RWPE1 (cell line): ENCODE measurements at regions of chr12 and their contacts with region 1.

Region 1: DNA sequence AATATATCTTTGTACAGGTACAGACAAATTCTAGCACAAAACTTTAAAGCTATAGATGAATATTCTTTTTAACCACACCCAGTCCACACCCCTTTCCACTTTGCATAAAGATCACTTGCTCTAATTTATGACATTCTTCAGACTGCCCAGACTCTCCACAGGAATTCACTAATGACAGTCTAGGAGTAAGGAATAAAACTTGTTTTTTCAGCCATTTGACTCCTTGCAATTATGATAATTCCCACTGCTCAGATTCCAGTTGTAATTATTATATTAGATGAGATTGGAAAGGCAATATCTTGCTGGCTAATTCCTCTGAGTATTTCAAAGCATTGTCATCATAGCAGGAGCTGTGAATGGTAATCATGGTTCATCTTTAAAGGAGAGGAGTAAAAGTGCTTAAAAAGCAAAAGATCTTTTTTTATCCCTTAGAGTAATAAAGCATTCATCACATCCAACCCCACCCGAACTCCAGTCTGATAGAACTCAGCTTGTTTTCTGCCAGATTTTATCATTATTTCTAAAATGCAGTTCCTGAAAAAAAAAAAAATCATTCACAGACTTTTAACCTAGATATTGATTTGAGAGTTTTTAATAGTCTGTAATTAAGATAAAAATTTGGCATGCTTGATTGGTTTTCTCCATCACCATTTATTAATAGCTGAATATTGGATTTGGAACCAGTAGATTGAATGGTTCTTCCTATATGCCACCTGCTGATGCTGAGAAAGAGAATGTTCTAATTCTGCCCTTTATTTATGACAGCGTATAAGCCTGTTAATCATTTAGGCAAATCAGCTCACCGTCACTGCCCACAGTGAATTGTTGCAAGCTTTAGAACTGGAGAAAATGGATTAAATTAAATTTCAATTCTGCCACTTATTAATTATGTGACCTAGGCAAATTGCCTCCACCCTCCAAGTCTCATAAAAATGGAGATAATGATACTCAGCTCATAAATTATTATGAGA is 93.9 kb upstream of the RASSF8 start:
- DNase-seq: no peak
- H3K27ac ChIP-seq: no peak overlapping the region
- CTCF ChIP-seq: no peak

Region 2: DNA sequence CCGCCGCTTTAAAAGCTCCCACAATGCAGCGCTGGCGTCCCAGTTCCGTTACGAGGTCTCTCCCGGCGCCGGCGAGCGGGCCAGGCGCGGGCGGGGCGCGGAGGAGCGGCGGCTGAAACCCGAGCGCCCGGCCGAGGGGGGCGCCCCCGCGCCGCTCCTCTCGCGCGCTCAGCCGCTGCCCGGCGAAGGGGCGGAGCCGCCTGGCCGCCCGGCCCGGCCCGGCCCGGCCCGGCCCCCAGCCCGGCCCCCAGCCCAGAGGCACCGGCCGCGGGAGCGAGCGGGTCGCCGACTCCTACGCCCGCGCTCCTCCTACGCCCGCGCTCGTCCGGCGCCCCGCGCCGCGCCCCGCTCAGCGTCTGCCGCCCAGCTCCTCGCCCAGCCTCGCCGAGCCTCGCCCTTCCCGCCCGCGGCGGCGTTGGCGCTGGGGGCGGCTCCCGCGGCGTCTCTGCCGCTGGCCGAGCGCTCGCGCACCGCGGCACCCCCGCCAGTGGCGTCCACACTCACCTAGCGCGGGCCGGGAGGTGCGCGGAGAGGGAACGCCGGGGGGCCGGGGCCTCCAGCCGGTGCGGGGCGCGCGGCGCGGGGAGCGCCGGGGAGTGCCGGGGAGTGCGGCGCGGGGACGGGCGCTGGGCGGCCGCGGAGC is 94.0 kb after region 1 on chr12 and contains the start of gene RASSF8:
- CTCF ChIA-PET with region 1: interaction called, 12 read pairs
- POLR2A ChIA-PET with region 1: no interaction called
- DNase-seq: peak; percentile 63
- H3K27ac ChIP-seq: peak within 1 kb of the TSS; percentile 94
- CTCF ChIP-seq: no peak